ENCODE measurements at regions of chr4 and their contacts with region 1.

Region 1: GRCh38 chr4:176377780-176378179 is 58.0 kb downstream of the SPCS3 start:
- DNase-seq: no peak
- H3K4me3 ChIP-seq: no peak overlapping the region
- H3K27ac ChIP-seq: no peak overlapping the region
- H3K4me1 ChIP-seq: no peaks in the 10 kb centered on the region
- H3K27me3 ChIP-seq: no peaks in the 10 kb centered on the region
- CTCF ChIP-seq: peak; percentile 64

Region 2: DNA sequence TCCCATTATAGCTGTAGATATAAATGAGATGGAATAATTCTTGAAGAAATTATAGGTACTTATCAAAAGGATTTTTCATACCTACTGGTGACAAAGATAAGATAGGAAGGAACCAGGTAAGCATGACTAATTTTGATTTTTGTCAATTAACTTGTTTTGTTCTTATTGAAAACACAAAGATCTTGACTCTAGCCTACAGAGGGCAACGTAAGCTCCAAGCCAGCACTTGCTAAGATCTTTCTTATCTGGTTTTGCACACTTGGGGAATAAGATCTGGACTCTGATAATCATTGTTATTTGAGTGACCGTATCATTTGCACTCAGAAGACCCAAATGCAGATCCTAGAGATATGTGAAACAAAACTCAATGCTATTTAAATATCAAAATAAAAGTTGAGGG is 191.5 kb after region 1 on chr4:
- CTCF ChIA-PET with region 1: no interaction called
- POLR2A ChIA-PET with region 1: no interaction called
- intact Hi-C with region 1: loop called (anchors 5 kb)
- DNase-seq: no peak
- H3K4me3 ChIP-seq: no peak overlapping the region
- H3K27ac ChIP-seq: no peak overlapping the region
- H3K4me1 ChIP-seq: no peaks in the 10 kb centered on the region
- H3K27me3 ChIP-seq: no peaks in the 10 kb centered on the region
- CTCF ChIP-seq: no peak

Region 3: GRCh38 chr4:176778491-176778890 is 400.7 kb after region 1 on chr4:
- CTCF ChIA-PET with region 1: no interaction called
- POLR2A ChIA-PET with region 1: no interaction called
- intact Hi-C with region 1: loop called (anchors 5 kb)
- DNase-seq: peak in 1 of 2 experiments; percentile 40
- H3K4me3 ChIP-seq: no peak overlapping the region
- H3K27ac ChIP-seq: 0 out of 2 replicates have a peak overlapping the region, but pooled peaks have one; percentile 11
- H3K4me1 ChIP-seq: peaks cover 27% of the 10 kb centered on the region
- H3K27me3 ChIP-seq: no peaks in the 10 kb centered on the region
- CTCF ChIP-seq: no peak

Region 4: DNA sequence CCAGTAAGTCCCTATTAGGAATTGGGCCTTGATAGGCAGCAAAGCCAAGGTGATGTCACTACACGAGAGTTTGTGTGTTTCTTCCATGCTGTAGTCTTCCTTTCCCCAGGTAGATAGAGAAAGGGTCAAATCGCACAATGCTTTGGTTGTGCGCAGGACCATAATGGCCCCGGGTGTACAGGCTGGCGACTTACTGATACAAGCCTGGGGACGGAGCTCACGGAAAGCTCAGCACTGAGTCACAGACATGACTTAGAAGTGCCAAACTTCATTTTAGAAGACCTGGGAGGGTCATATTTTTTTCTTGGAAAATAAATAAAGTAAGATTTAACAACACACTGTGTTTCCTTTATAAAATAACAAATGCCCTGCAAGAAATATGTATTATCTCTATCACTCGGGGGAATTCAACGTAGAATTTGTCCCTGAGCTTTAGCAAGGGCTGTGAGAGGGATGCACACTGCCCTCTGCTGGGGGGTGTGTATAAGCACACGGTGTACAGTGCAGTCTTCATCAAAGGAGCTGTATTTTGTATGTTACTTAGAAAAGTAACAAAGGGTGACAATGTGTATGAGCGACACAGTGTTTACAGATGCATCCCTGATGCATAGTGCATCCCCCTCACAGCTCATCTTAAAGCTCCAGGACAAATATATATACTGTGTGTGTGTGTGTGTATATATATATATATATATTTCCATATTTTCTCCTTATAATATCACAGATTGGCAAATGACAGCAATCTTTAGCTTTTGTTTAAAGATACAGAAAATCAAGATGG is 669.5 kb after region 1 on chr4:
- CTCF ChIA-PET with region 1: interaction called, 13 read pairs
- POLR2A ChIA-PET with region 1: no interaction called
- intact Hi-C with region 1: loop called (anchors 1 kb)
- DNase-seq: peak in 1 of 2 experiments; percentile 54
- H3K4me3 ChIP-seq: no peak overlapping the region
- H3K27ac ChIP-seq: no peak overlapping the region
- H3K4me1 ChIP-seq: no peaks in the 10 kb centered on the region
- H3K27me3 ChIP-seq: no peaks in the 10 kb centered on the region
- CTCF ChIP-seq: peak; percentile 85

Region 5: DNA sequence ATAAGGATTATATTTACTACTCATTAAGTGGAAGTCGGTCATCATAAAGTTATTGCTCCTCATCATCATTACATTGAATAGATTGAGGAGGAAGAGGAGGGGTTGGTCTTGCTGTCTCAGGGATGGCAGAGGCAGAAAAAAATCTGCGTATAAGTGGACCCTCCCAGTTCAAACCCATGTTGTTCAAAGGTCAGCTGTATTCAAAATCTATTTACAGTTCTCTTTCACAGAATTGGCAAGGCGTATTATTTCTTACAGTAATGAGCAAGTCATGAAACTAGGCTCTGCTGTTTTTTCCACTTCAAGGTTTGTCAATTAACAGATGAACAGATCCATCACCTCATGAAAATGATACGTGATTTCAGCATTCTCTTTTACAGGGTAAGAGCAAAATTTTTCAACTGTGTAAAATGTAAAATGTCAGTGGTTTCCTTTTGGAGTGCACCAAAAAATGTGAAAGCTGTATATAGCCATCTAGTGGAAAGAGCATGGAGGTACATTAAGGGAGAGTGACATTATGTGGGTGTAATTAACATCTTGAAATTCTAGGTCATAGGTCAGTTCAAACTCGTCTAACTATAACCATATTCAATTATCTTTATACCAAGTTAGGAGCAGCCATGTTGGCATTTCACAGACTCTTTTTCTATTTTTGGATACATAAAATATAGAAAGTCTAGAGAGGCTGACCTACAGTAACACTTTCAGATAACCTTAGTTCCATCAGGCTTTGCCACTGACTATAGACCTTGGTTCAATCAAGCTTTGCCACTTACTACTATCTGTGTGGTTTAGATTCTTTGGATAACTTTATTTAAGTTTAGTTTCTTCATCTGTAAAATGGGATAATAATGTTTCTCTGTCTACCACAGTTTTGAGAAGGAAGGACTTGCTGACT is 961.9 kb after region 1 on chr4:
- CTCF ChIA-PET with region 1: no interaction called
- POLR2A ChIA-PET with region 1: no interaction called
- intact Hi-C with region 1: loop called (anchors 1 kb)
- DNase-seq: peak in 1 of 2 experiments; percentile 37
- H3K4me3 ChIP-seq: no peak overlapping the region
- H3K27ac ChIP-seq: no peak overlapping the region
- H3K4me1 ChIP-seq: no peaks in the 10 kb centered on the region
- H3K27me3 ChIP-seq: no peaks in the 10 kb centered on the region
- CTCF ChIP-seq: peak; percentile 69

Region 6: DNA sequence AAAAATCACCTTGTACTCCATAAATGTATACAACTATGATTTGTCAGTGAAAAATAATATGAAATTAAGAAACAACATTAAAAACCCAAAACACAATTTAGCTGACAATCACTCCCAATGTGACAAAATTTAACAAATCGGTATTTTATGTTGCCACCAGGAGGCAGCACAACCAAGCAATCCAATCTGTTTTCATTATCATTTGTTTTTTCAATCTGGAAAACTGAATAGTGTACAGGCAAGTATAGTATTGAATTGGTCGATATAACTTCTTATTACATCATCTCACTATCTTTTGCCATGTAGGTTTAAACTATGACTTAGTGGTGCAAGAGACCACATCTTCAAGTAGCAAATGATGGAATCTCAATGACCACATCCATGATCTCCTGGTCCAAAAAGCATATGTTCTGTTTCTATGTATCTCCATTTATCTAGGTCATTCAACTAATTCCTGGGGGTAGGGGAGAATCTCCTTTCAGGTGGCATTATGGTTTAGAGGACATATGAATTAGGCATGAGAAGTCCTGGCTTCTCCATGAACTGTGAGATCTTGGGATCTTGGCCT is 1177.3 kb after region 1 on chr4:
- CTCF ChIA-PET with region 1: no interaction called
- POLR2A ChIA-PET with region 1: no interaction called
- intact Hi-C with region 1: loop called (anchors 10 kb)
- DNase-seq: peak in 1 of 2 experiments; percentile 28
- H3K4me3 ChIP-seq: no peak overlapping the region
- H3K27ac ChIP-seq: no peak overlapping the region
- H3K4me1 ChIP-seq: no peaks in the 10 kb centered on the region
- H3K27me3 ChIP-seq: no peaks in the 10 kb centered on the region
- CTCF ChIP-seq: peak; percentile 74

Measured in PC-9 (cell line).